ENCODE measurements at regions of chr3 and their contacts with region 1.

Region 1: DNA sequence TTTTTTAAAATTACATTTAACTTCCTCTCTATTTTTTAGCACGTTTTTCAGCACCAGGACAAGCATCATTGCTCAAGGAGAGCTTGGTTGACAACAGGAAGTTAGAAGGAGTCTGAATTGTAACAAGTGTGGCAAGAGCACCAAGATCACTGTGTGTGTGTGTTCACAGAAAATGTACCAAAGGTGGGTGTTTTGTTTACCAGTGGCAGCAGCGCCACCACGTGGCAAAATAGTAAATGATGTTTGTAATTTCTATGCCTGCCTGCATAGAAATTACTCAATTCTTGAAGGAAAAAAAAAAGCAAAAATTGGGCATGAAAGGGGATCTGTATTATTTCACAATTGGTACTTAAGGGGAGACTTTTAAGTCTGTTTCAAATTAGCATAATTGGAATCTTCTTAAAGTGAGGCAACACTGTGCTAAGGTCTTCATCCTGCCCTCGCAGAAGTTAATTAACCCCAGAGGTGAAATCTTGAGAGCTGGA is 7.4 kb upstream of the U2SURP start:
- DNase-seq: peak in 41 of 42 donors; percentile 13 to 83 (median 58)

Region 2: GRCh38 chr3:142586803-142587406 is 407.1 kb before region 1 on chr3:
- intact Hi-C with region 1: loop called (anchors 5 kb)
- DNase-seq: peak in 14 of 42 donors; percentile 19 to 63 (median 36)

Region 3: GRCh38 chr3:142828703-142829305 is 165.2 kb before region 1 on chr3:
- intact Hi-C with region 1: loop called (anchors 10 kb)
- DNase-seq: peak; percentile 64 to 93 (median 84)

Region 4: GRCh38 chr3:142857056-142857455 is 136.9 kb before region 1 on chr3:
- intact Hi-C with region 1: no loop called
- DNase-seq: peak in 6 of 42 donors; percentile 5 to 24 (median 7)

Region 5: DNA sequence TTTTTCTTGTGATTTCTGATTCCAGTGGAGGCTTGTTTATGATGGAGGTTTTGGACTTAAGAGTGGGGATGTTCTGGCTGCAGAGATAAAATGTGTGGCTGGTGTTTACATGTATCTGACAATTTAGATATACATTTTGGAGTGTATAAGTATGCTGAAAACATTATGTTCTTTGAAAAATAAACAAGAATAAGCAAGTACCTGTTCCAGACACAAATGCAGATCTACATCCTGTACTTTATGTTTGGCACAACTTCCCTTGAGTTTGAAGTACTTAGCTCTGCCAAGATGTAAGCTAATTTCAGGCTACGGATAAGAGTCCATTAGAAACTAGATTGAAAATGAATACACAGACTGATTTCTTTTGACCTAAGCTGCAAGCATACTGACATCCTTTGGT is 402.8 kb after region 1 on chr3:
- intact Hi-C with region 1: no loop called
- DNase-seq: no peak

Measured in head of caudate nucleus (tissue), 42 donors.